Naive thymus-derived CD4-positive, alpha-beta T cell (primary cell): ENCODE measurements at regions of chr9 and their contacts with region 1.

Region 1: GRCh38 chr9:4662108-4662988 is at the start of gene PLPP6:
- DNase-seq: peak; percentile 55 to 81 (median 76)
- ATAC-seq: peak; percentile 86
- H3K4me3 ChIP-seq: peak within 1 kb of the TSS; percentile 63
- H3K4me3 Mint-ChIP-seq: peak within 1 kb of the TSS; percentile 89 to 98 (median 96)
- H3K27ac ChIP-seq: peak within 1 kb of the TSS; percentile 78
- H3K27ac Mint-ChIP-seq: peak within 1 kb of the TSS; percentile 85 to 98 (median 95)
- H3K4me1 ChIP-seq: peaks cover 21 to 50% of the 10 kb centered on the region in 2 donors
- H3K4me1 Mint-ChIP-seq: peaks cover 41 to 80% (median 64%) of the 10 kb centered on the region in 7 donors
- H3K27me3 ChIP-seq: no peaks in the 10 kb centered on the region
- H3K27me3 Mint-ChIP-seq: peaks cover 0 to 12% (median 0%) of the 10 kb centered on the region in 5 donors
- total RNA-seq, gene PLPP6: 7.4 to 24.1 (median 10.2) TPM

Region 2: DNA sequence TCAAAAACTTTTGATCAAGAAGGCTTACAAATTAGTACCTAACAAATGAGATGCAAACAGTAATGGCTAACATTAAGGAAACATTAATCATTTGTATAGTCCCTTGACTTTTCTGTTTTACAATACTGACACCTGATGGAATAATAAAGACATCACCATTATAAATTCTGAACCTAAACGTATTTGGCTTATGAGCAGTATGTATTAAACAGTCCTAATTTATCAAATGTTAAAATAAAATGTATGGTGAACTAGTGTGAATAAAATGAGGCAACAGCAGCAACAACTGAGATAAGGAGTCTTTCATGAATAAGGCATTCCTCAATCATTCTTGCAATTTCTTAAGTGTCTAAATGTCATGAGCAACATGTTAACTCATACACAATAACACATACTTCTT is 1824.4 kb before region 1 on chr9:
- CTCF ChIA-PET with region 1: no interaction called
- POLR2A ChIA-PET with region 1: no interaction called
- intact Hi-C with region 1: loop called in 1 of 2 experiments (anchors 5 kb)
- DNase-seq: no peak
- ATAC-seq: no peak
- H3K4me3 ChIP-seq: no peak overlapping the region
- H3K4me3 Mint-ChIP-seq: no peak overlapping the region
- H3K27ac ChIP-seq: no peak overlapping the region
- H3K27ac Mint-ChIP-seq: peak overlapping the region in 2 of 9 donors; percentile 37 to 69
- H3K4me1 ChIP-seq: peaks cover 8 to 12% of the 10 kb centered on the region in 2 donors
- H3K4me1 Mint-ChIP-seq: peaks cover 9 to 27% (median 18%) of the 10 kb centered on the region in 7 donors
- H3K27me3 ChIP-seq: no peaks in the 10 kb centered on the region
- H3K27me3 Mint-ChIP-seq: no peaks in the 10 kb centered on the region

Region 3: DNA sequence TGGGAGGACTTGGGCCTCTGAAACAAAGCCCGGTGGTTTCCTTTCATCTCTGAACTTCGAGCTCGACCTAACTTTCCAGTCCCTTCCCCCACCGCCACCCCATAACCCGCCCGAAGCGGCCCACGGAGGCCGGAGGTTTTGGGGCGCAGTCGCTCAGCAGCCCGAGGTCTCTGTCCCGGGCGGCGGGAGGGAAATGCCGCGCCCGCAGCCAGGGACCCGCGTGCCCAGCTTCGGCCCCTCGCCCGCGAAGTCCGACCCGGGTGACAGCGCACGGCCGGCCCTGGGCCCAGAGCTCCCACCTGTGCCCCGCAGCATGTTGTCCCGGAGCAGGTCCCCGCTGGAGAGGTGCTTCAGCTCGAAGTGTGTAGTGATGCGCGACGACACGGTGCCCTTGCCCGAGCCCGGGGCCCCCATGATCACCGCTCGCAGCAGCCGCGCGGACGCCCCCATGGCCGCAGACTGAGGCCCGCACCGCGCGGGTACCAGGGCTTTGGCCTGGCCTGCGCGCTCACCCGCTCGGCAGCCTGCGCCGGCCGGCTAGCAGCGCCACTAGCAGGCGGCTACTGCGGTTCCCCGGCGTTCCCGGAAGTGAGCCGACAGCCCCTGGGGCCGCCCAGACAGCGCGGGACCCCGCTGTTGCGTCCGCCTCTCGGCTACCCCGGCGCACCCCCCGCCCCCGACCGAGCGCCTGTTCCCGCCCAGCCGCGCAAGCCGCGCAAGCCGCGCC is 78.5 kb after region 1 on chr9 and contains the start of gene AK3:
- CTCF ChIA-PET with region 1: interaction called, 4 read pairs
- POLR2A ChIA-PET with region 1: interaction called, 29 read pairs
- intact Hi-C with region 1: loop called (anchors 1 kb)
- DNase-seq: peak; percentile 72 to 85 (median 83)
- ATAC-seq: peak; percentile 95
- H3K4me3 ChIP-seq: peak within 1 kb of the TSS; percentile 73
- H3K4me3 Mint-ChIP-seq: peak within 1 kb of the TSS; percentile 88 to 99 (median 94)
- H3K27ac ChIP-seq: peak within 1 kb of the TSS; percentile 86
- H3K27ac Mint-ChIP-seq: peak within 1 kb of the TSS; percentile 86 to 98 (median 93)
- H3K4me1 ChIP-seq: peaks cover 10 to 16% of the 10 kb centered on the region in 2 donors
- H3K4me1 Mint-ChIP-seq: peaks cover 22 to 49% (median 40%) of the 10 kb centered on the region in 7 donors
- H3K27me3 ChIP-seq: no peaks in the 10 kb centered on the region
- H3K27me3 Mint-ChIP-seq: no peaks in the 10 kb centered on the region
- total RNA-seq, gene AK3: 18.0 to 34.8 (median 25.8) TPM

Region 4: DNA sequence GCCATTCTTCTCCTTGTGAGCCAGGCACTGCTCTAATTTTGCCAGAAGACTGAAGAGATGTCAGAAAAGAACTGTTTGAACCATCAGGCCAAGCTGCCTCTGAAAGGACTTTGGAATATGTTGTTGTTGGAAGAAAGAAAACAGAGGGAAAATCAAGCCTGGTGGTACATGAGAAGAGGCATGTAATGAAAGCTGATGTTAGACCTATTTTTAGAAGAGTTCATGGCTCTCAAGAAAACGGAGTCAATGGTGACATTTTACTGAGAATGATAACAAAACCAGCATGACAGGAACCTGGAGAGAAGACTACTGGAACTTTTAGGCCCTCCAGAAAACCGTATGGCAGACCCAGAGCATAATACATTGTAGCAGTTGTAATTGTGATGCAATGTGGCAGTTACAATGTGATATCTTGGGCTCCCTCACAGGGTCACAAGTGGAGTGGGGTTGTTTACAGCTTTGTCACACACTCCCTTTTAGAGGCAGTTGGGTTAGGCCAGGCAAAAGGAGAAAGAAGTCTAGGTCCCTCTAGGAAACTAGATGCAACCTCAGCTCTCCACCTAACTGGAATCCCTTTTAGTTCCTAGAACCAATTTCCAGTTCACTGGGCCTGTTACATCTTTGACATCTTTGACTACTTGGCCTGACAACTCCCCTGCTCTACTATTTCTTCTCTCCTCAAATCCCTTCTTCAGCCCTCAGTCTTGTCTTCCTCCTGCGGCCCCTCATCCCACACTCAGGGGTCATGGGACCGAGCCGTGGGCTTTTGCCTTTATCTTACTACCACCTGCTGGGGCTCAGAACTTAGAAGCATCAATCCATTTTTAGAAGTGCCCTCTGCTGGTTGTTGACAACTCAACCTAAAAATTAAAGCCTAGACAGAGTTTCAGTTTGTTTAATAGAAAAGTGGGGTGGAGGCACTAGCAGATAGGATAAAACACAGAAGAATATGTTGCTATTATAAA is 261.5 kb after region 1 on chr9:
- CTCF ChIA-PET with region 1: no interaction called
- POLR2A ChIA-PET with region 1: no interaction called
- intact Hi-C with region 1: loop called in 1 of 2 experiments (anchors 1 kb)
- DNase-seq: peak in 5 of 9 donors; percentile 27 to 41 (median 31)
- ATAC-seq: peak; percentile 71
- H3K4me3 ChIP-seq: no peak overlapping the region
- H3K4me3 Mint-ChIP-seq: no peak overlapping the region
- H3K27ac ChIP-seq: no peak overlapping the region
- H3K27ac Mint-ChIP-seq: peak overlapping the region in 3 of 9 donors; percentile 12 to 76 (median 62)
- H3K4me1 ChIP-seq: no peaks in the 10 kb centered on the region
- H3K4me1 Mint-ChIP-seq: peaks cover 0 to 32% (median 4%) of the 10 kb centered on the region in 7 donors
- H3K27me3 ChIP-seq: no peaks in the 10 kb centered on the region
- H3K27me3 Mint-ChIP-seq: no peaks in the 10 kb centered on the region

Region 5: GRCh38 chr9:4994166-4994890 is 332.0 kb after region 1 on chr9:
- CTCF ChIA-PET with region 1: no interaction called
- POLR2A ChIA-PET with region 1: no interaction called
- intact Hi-C with region 1: no loop called
- DNase-seq: no peak
- ATAC-seq: no peak
- H3K4me3 ChIP-seq: no peak overlapping the region
- H3K4me3 Mint-ChIP-seq: no peak overlapping the region
- H3K27ac ChIP-seq: no peak overlapping the region
- H3K27ac Mint-ChIP-seq: peak overlapping the region in 1 of 9 donors; percentile 1
- H3K4me1 ChIP-seq: no peaks in the 10 kb centered on the region
- H3K4me1 Mint-ChIP-seq: peaks cover 16 to 72% (median 22%) of the 10 kb centered on the region in 7 donors
- H3K27me3 ChIP-seq: no peaks in the 10 kb centered on the region
- H3K27me3 Mint-ChIP-seq: no peaks in the 10 kb centered on the region

Region 6: DNA sequence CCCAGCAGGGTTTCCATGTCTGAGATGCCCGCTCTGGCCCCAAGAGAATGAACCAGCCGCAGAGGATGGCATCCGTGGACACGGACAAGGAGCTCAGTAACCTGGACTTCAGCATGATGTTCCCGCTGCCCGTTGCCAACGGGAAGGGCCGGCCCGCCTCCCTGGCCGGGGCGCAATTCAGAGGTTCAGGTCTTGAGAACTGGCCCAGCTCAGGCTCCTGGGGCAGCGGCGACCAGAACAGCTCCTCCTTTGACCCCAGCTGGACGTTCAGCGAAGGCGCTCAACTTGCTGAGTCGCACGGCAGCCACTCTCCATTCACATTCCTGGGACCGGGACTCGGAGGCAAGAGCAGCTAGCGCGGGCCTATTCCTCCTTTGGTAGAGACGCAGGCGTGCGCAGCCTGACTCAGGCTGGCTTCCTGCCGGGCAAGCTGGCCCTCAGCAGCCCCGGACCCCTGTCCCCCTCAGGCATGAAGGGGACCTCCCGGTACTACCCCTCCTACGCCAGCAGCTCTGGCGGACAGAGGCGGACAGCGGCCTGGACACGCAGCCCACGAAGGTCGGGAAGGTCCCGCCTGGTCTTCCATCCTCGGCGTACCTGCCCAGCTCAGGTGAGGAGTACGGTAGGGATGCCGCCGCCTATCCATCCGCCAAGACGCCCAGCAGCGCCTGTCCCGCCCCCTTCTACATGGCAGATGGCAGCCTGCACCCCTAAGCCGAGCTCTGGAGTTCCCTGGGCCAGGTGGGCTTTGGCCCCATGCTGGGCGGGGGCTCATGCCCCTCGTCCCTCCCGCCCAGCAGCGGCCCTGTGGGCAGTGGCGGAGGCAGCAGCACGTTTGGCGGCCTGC is 448.7 kb after region 1 on chr9:
- CTCF ChIA-PET with region 1: no interaction called
- POLR2A ChIA-PET with region 1: no interaction called
- intact Hi-C with region 1: no loop called
- DNase-seq: no peak
- ATAC-seq: no peak
- H3K4me3 ChIP-seq: no peak overlapping the region
- H3K4me3 Mint-ChIP-seq: no peak overlapping the region
- H3K27ac ChIP-seq: no peak overlapping the region
- H3K27ac Mint-ChIP-seq: no peak overlapping the region
- H3K4me1 ChIP-seq: no peaks in the 10 kb centered on the region
- H3K4me1 Mint-ChIP-seq: no peaks in the 10 kb centered on the region
- H3K27me3 ChIP-seq: no peaks in the 10 kb centered on the region
- H3K27me3 Mint-ChIP-seq: no peaks in the 10 kb centered on the region

Region 7: GRCh38 chr9:5843794-5844504 is 1181.6 kb after region 1 on chr9:
- CTCF ChIA-PET with region 1: no interaction called
- POLR2A ChIA-PET with region 1: no interaction called
- intact Hi-C with region 1: loop called (anchors 10 kb)
- DNase-seq: peak in 2 of 9 donors; percentile 7 to 22
- ATAC-seq: peak; percentile 20
- H3K4me3 ChIP-seq: peak overlapping the region; percentile 5
- H3K4me3 Mint-ChIP-seq: peak overlapping the region; percentile 75 to 85 (median 80)
- H3K27ac ChIP-seq: peak overlapping the region; percentile 24
- H3K27ac Mint-ChIP-seq: peak overlapping the region; percentile 58 to 93 (median 91)
- H3K4me1 ChIP-seq: peaks cover 45 to 47% of the 10 kb centered on the region in 2 donors
- H3K4me1 Mint-ChIP-seq: peaks cover 50 to 83% (median 64%) of the 10 kb centered on the region in 7 donors
- H3K27me3 ChIP-seq: no peaks in the 10 kb centered on the region
- H3K27me3 Mint-ChIP-seq: no peaks in the 10 kb centered on the region